Right ventricle myocardium inferior (tissue), 1 donor: ENCODE measurements at regions of chr3 and their contacts with region 1.

Region 1: GRCh38 chr3:178454726-178455125 is 81.5 kb upstream of the KCNMB2 start:
- DNase-seq: peak; percentile 80
- ATAC-seq: peak; percentile 97

Region 2: DNA sequence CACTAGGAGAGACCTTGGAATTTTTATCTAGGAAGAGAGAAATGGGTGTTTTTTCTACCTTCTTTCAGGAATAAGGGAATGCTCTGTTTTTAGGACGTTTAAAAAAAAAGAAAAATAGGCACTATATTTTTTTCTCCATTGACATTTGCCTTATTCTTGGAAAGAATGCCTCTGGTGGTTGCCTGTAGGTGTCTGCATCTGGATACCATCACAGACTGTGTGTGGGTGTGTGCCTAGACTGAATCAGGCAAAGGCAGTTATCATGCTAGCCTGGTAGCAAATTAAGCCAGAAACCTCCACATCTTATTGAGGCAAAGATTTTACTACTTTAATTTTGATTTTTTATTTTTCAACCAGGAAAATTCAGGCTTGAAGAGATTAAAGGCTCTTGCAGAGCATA is 432.1 kb before region 1 on chr3:
- intact Hi-C with region 1: no loop called
- DNase-seq: no peak
- ATAC-seq: no peak

Region 3: DNA sequence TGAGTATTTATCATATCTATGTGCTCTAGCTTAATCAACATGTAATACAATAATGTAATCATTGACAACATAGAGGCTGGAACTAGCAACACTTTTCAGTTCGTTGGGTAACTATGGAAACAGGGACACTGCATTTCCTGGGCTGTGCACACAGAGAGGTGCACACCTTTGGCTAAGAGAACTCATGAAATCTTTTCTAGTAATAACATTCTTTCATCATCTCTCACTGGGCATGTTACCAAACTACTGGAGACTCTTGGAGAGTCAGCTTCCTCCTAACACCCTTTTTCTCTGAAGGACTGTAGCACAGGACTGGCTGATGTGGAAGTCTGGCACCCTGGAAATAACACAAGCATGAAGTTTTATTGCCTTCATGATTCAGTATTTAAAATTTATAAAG is 217.1 kb after region 1 on chr3:
- intact Hi-C with region 1: loop called (anchors 10 kb)
- DNase-seq: no peak
- ATAC-seq: peak; percentile 45